GM12878 (cell line): ENCODE measurements at regions of chr1 and their contacts with region 1.

Region 1: GRCh38 chr1:3676581-3677470 is 24.5 kb downstream of the TP73 start:
- DNase-seq: peak; percentile 93
- ATAC-seq: peak; percentile 67
- H3K4me3 ChIP-seq: peak overlapping the region; percentile 40; the same call in 1 of the 2 replicates
- H3K27ac ChIP-seq: peak overlapping the region; percentile 89
- H3K4me1 ChIP-seq: peaks cover 77% of the 10 kb centered on the region
- H3K27me3 ChIP-seq: no peaks in the 10 kb centered on the region
- CTCF ChIP-seq: peak; percentile 43 to 58 (median 52)
- EP300 ChIP-seq: peak; percentile 89 to 95
- POLR2A ChIP-seq: no peak; the same call in none of the 2 replicates
- RAD21 ChIP-seq: peak; percentile 42; the same call in 1 of the 2 replicates

Region 2: GRCh38 chr1:3515774-3516480 is 160.9 kb before region 1 on chr1:
- CTCF ChIA-PET with region 1: no interaction called
- POLR2A ChIA-PET with region 1: no interaction called
- RAD21 ChIA-PET with region 1: no interaction called
- SMC1A ChIA-PET with region 1: no interaction called
- in situ Hi-C with region 1: no loop called
- intact Hi-C with region 1: no loop called
- DNase-seq: no peak
- ATAC-seq: no peak
- H3K4me3 ChIP-seq: no peak overlapping the region
- H3K27ac ChIP-seq: no peak overlapping the region
- H3K4me1 ChIP-seq: no peaks in the 10 kb centered on the region
- H3K27me3 ChIP-seq: no peaks in the 10 kb centered on the region
- CTCF ChIP-seq: no peak
- EP300 ChIP-seq: no peak
- POLR2A ChIP-seq: no peak
- RAD21 ChIP-seq: no peak

Region 3: GRCh38 chr1:3649342-3650247 is 27.2 kb before region 1 on chr1 and contains the start of gene WRAP73:
- CTCF ChIA-PET with region 1: interaction called, 63 read pairs
- POLR2A ChIA-PET with region 1: interaction called, 65 read pairs
- RAD21 ChIA-PET with region 1: interaction called, 78 read pairs
- SMC1A ChIA-PET with region 1: interaction called, 65 read pairs
- in situ Hi-C with region 1: no loop called
- intact Hi-C with region 1: no loop called
- DNase-seq: peak; percentile 76
- ATAC-seq: peak; percentile 74
- H3K4me3 ChIP-seq: peak within 1 kb of the TSS; percentile 84
- H3K27ac ChIP-seq: peak within 1 kb of the TSS; percentile 68; the same call in 1 of the 2 replicates
- H3K4me1 ChIP-seq: peaks cover 15% of the 10 kb centered on the region
- H3K27me3 ChIP-seq: no peaks in the 10 kb centered on the region
- CTCF ChIP-seq: peak; percentile 25 to 37 (median 32); a peak in 3 of 6 replicates
- EP300 ChIP-seq: no peak
- POLR2A ChIP-seq: peak; percentile 79
- RAD21 ChIP-seq: no peak
- polyA plus RNA-seq, gene WRAP73: 3.2 to 7.6 TPM

Region 4: DNA sequence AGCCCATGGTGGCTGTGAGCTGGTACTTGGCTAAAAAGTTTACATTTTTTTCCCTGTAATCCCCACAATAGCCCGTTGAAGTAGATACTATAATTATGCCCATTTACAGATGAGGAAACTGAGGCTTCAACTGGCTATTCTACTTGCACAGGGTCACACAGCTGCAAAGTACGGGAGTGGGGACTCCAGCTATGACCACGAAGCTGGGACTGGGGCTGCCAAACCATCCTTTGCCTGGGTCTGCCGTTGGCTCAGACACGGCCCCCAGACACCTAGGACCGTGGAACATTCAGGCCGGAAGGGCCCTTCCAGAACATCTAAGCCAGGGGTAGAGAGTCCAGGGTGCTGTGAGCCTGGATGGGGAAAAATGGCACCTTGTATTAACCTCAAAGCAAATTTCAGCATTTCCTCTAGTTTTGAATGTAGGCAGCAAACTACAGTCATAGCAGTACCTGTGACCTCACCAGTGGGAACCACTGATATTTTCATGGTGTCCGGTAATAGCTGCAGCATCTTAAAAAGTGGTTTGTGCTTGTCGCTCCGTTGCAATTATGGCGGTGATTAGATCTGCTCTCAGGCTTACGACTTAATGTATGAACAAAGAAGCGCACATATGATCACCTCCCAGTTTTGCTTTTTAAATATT is 20.3 kb before region 1 on chr1:
- CTCF ChIA-PET with region 1: interaction called, 63 read pairs
- POLR2A ChIA-PET with region 1: interaction called, 65 read pairs
- RAD21 ChIA-PET with region 1: interaction called, 78 read pairs
- SMC1A ChIA-PET with region 1: interaction called, 65 read pairs
- in situ Hi-C with region 1: no loop called
- intact Hi-C with region 1: loop called (anchors 1 kb)
- DNase-seq: peak; percentile 92
- ATAC-seq: peak; percentile 64
- H3K4me3 ChIP-seq: peak overlapping the region; percentile 66
- H3K27ac ChIP-seq: peak overlapping the region; percentile 93
- H3K4me1 ChIP-seq: peaks cover 48% of the 10 kb centered on the region
- H3K27me3 ChIP-seq: no peaks in the 10 kb centered on the region
- CTCF ChIP-seq: no peak
- EP300 ChIP-seq: peak in 1 of 2 experiments; percentile 96; a peak in 3 of 4 replicates
- POLR2A ChIP-seq: no peak
- RAD21 ChIP-seq: no peak

Region 5: GRCh38 chr1:3746830-3747521 is 70.2 kb after region 1 on chr1:
- CTCF ChIA-PET with region 1: no interaction called
- POLR2A ChIA-PET with region 1: no interaction called
- RAD21 ChIA-PET with region 1: no interaction called
- SMC1A ChIA-PET with region 1: no interaction called
- in situ Hi-C with region 1: no loop called
- intact Hi-C with region 1: no loop called
- DNase-seq: peak; percentile 21
- ATAC-seq: peak; percentile 98
- H3K4me3 ChIP-seq: peak overlapping the region; percentile 70
- H3K27ac ChIP-seq: no peak overlapping the region
- H3K4me1 ChIP-seq: peaks cover 11% of the 10 kb centered on the region
- H3K27me3 ChIP-seq: no peaks in the 10 kb centered on the region
- CTCF ChIP-seq: no peak
- EP300 ChIP-seq: no peak
- POLR2A ChIP-seq: peak; percentile 57
- RAD21 ChIP-seq: no peak